Activated CD8-positive, alpha-beta memory T cell treated with anti-CD3 and anti-CD28 coated beads, Interleukin-2, amount 10 ng/mL, durations not matched to agents 7 days and 5 days (primary cell): ENCODE measurements at regions of chr1 and their contacts with region 1.

Region 1: DNA sequence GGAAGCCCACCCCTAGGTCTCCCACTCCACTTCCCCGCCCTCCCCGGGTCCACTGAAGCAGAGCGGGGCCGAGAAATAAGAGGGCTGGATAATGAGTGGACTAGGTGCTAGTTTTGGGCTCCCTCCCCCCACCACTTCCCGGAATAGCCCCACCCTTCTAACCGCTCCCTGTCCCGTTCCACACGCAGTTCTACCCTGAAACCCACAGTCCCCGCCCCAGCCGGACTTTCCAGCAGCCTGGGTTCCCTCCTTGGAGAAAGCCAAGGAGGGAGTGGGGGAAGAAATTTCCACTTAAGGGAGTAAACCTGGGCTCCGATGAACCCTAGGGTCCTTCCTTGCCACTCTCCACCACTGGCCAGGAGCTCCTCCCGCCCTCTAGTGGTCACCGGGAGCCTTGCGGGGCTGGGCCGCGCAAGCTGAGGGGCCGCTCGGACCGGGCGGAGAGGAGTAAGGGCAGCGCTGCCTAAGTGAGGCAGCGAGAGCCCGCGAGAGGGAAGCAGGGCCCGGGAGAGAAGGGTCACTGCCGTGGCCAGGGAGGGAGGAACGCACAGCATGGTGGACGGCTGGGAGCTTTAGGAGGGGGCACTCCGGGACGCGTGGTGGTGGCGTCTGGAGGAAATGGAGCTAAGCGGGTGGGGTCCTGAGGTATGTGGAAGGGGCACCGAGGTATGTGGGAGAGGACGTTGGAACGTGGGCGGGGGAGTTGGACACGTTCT is 14.3 kb downstream of the THBS3 start:
- DNase-seq: peak; percentile 86
- ATAC-seq: peak; percentile 66
- H3K4me3 Mint-ChIP-seq: peak overlapping the region; percentile 73
- H3K27ac Mint-ChIP-seq: peak overlapping the region; percentile 92
- H3K4me1 Mint-ChIP-seq: peaks cover 29% of the 10 kb centered on the region
- H3K27me3 Mint-ChIP-seq: no peaks in the 10 kb centered on the region

Region 2: GRCh38 chr1:155179112-155180031 is 14.1 kb before region 1 on chr1:
- CTCF ChIA-PET with region 1: interaction called, 117 read pairs
- DNase-seq: no peak
- ATAC-seq: no peak
- H3K4me3 Mint-ChIP-seq: no peak overlapping the region
- H3K27ac Mint-ChIP-seq: no peak overlapping the region
- H3K4me1 Mint-ChIP-seq: peaks cover 30% of the 10 kb centered on the region
- H3K27me3 Mint-ChIP-seq: no peaks in the 10 kb centered on the region

Region 3: DNA sequence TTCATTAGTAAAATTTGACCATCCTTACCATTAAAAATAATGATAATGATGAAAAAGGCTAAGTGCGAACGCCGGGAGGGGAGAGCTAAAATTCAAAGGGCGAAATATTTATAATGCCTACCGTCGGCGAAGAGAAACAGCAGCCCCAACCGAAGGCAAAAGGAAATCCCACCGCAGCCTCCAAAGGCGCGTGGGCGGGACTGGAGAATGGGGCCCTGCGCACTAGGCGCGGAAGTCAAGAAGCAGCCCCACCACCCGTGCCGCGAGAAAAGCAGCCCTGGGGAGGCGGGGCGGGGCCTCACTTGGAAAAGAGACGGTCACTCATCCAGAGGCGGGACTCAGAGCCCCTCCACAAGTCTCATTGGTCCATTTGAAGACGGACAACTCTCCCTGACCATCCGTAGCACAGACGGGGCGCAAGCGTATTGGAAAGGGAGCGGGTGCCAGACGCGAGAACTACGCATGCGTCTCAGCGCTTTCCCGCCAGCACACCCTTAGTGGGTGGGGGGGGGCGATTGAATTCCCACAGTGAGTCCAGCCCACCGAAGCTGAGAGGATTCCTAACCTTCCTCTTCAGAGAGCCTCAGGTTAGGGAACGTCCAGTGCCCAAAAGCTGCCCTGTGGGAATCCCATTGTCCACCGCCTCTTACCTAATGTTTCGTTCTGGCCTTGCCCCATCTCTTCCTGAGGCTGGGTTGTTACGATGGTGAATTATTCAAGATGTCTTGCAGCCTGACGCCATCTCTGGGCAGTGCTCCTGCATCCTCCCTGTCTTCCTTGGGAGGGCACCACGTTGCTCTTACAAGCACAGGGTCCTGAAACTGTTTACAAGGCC is 34.0 kb after region 1 on chr1:
- CTCF ChIA-PET with region 1: interaction called, 21 read pairs
- DNase-seq: peak; percentile 100
- ATAC-seq: peak; percentile 97
- H3K4me3 Mint-ChIP-seq: peak overlapping the region; percentile 98
- H3K27ac Mint-ChIP-seq: peak overlapping the region; percentile 98
- H3K4me1 Mint-ChIP-seq: peaks cover 41% of the 10 kb centered on the region
- H3K27me3 Mint-ChIP-seq: no peaks in the 10 kb centered on the region

Region 4: GRCh38 chr1:155261852-155262673 is 68.6 kb after region 1 on chr1 and contains the start of gene SCAMP3:
- CTCF ChIA-PET with region 1: no interaction called
- DNase-seq: peak; percentile 95
- ATAC-seq: peak; percentile 97
- H3K4me3 Mint-ChIP-seq: peak within 1 kb of the TSS; percentile 95
- H3K27ac Mint-ChIP-seq: peak within 1 kb of the TSS; percentile 86
- H3K4me1 Mint-ChIP-seq: peaks cover 39% of the 10 kb centered on the region
- H3K27me3 Mint-ChIP-seq: no peaks in the 10 kb centered on the region
- total RNA-seq, gene SCAMP3: 82.0 to 108 TPM